ENCODE measurements at regions of chr17 and their contacts with region 1.

Region 1: GRCh38 chr17:50783193-50783660 is 15.9 kb upstream of the ANKRD40CL start:
- DNase-seq: peak; percentile 74
- H3K4me3 ChIP-seq: no peak overlapping the region
- H3K27ac ChIP-seq: no peak overlapping the region
- H3K4me1 ChIP-seq: no peaks in the 10 kb centered on the region
- H3K27me3 ChIP-seq: no peaks in the 10 kb centered on the region
- CTCF ChIP-seq: peak; percentile 84 to 99 (median 97)
- POLR2A ChIP-seq: no peak

Region 2: DNA sequence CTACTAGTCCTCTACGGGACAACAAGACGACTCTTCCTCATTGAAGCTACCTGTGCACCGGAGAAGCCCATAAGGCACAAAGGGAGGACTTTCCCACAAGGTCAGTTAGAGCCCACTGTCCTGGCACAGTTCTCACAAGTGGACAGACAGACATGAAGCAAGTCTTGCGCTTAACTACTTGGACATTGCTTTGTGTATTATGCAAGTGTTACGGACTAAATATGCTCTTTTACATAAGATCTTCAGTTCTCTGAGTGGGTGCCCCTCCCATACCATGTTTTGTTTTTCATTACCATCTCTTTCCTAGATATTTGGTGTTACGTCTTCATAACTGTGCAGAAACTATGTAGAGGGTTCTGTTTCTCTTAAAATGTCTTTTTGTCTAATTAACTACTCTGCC is 34.0 kb before region 1 on chr17:
- intact Hi-C with region 1: no loop called
- DNase-seq: no peak
- H3K4me3 ChIP-seq: no peak overlapping the region
- H3K27ac ChIP-seq: no peak overlapping the region
- H3K4me1 ChIP-seq: no peaks in the 10 kb centered on the region
- H3K27me3 ChIP-seq: no peaks in the 10 kb centered on the region
- CTCF ChIP-seq: no peak
- POLR2A ChIP-seq: no peak

Region 3: DNA sequence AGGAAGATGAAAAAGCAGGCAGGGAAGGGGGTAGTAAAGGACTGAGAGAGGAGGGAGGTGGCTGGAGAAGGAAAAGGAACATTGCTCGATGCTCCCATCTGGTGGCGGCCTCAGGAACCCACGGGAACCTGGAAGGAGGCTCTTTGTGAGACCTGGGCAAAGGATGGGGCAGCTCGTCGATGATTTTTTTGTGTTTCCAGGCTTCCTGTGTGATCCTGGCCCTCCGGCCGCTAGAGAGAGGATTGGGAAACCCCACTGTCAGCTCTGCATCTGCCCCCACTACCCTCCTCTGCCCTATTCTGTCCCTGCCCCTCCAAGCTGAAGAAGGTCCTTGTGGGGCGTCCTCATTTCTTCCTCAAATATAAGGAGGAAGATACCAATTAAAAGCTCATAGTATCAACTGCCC is 58.7 kb after region 1 on chr17:
- intact Hi-C with region 1: loop called (anchors 2 kb)
- DNase-seq: peak; percentile 55
- H3K4me3 ChIP-seq: no peak overlapping the region
- H3K27ac ChIP-seq: no peak overlapping the region
- H3K4me1 ChIP-seq: no peaks in the 10 kb centered on the region
- H3K27me3 ChIP-seq: no peaks in the 10 kb centered on the region
- CTCF ChIP-seq: peak; percentile 68 to 88 (median 85)
- POLR2A ChIP-seq: no peak

Region 4: GRCh38 chr17:50949989-50950881 is 167.0 kb after region 1 on chr17:
- intact Hi-C with region 1: loop called (anchors 10 kb)
- DNase-seq: peak; percentile 67
- H3K4me3 ChIP-seq: no peak overlapping the region
- H3K27ac ChIP-seq: peak overlapping the region; percentile 77 to 82
- H3K4me1 ChIP-seq: peaks cover 20% of the 10 kb centered on the region
- H3K27me3 ChIP-seq: no peaks in the 10 kb centered on the region
- CTCF ChIP-seq: peak; percentile 35 to 91 (median 83)
- POLR2A ChIP-seq: peak; percentile 32